Heart left ventricle (tissue), 16 donors: ENCODE measurements at regions of chr2 and their contacts with region 1.

Region 1: GRCh38 chr2:152005607-152006006 is 93.2 kb downstream of the CACNB4 start:
- DNase-seq: no peak
- ATAC-seq: no peak
- H3K4me3 ChIP-seq: no peak overlapping the region
- H3K27ac ChIP-seq: no peak overlapping the region
- H3K4me1 ChIP-seq: peaks cover 0 to 7% (median 0%) of the 10 kb centered on the region in 12 donors
- H3K27me3 ChIP-seq: no peaks in the 10 kb centered on the region
- CTCF ChIP-seq: no peak
- POLR2A ChIP-seq: no peak

Region 2: DNA sequence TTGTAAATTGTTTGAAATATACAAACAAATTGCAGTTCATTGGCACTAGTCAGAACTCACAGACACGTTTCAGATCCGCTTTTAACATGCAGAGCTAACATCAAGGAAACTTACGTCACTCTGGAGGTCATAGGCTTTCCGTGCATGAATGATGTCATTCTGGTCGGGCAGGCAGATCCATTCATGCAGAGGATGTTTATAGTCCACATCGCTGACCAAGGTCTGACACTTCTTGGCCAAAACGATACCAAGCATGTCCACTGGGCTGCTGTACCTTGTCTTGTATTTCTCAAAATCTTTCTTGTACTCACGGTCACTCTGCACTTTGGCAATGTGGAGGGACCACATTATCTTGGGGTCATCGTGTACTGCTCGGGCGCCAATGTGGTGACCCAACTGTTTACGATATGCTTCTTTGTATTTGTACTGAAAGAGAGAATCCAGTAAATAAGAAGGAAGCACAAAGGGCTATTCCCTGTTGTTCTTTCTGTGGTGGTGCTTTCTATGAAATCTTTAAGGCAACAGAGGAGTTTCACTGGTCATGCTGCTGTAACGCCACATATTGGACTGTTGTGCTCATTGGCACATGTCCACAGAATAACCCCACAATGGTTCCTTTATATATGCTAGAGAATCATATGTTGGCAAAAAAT is 386.1 kb before region 1 on chr2:
- intact Hi-C with region 1: loop called in 7 of 10 experiments (anchors 5 to 10 kb)
- DNase-seq: no peak
- ATAC-seq: peak in 1 of 4 donors; percentile 74
- H3K4me3 ChIP-seq: no peak overlapping the region
- H3K27ac ChIP-seq: no peak overlapping the region
- H3K4me1 ChIP-seq: no peaks in the 10 kb centered on the region
- H3K27me3 ChIP-seq: no peaks in the 10 kb centered on the region
- CTCF ChIP-seq: no peak
- POLR2A ChIP-seq: no peak

Region 3: DNA sequence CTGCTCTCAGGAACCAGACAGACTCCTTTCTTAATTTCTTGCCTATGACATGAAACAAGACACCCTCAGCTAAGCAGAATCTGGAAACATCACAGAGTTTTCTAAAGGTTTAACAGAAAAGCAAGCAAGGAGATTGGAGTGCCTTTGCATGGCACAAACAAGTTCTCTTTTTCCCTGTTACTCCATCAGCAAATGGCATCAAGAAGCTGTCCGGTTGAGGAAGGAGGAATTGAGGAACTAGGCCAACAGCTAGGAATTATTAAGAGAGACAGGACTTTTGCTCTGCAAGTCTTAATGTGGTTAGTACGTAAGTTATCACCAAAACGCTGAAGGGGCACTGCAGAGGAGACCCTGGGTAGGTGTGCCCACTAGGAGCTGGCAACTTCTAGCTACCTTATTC is 324.6 kb before region 1 on chr2:
- intact Hi-C with region 1: loop called in 2 of 10 experiments (anchors 5 to 10 kb)
- DNase-seq: no peak
- ATAC-seq: no peak
- H3K4me3 ChIP-seq: no peak overlapping the region
- H3K27ac ChIP-seq: no peak overlapping the region
- H3K4me1 ChIP-seq: no peaks in the 10 kb centered on the region
- H3K27me3 ChIP-seq: no peaks in the 10 kb centered on the region
- CTCF ChIP-seq: no peak
- POLR2A ChIP-seq: no peak

Region 4: DNA sequence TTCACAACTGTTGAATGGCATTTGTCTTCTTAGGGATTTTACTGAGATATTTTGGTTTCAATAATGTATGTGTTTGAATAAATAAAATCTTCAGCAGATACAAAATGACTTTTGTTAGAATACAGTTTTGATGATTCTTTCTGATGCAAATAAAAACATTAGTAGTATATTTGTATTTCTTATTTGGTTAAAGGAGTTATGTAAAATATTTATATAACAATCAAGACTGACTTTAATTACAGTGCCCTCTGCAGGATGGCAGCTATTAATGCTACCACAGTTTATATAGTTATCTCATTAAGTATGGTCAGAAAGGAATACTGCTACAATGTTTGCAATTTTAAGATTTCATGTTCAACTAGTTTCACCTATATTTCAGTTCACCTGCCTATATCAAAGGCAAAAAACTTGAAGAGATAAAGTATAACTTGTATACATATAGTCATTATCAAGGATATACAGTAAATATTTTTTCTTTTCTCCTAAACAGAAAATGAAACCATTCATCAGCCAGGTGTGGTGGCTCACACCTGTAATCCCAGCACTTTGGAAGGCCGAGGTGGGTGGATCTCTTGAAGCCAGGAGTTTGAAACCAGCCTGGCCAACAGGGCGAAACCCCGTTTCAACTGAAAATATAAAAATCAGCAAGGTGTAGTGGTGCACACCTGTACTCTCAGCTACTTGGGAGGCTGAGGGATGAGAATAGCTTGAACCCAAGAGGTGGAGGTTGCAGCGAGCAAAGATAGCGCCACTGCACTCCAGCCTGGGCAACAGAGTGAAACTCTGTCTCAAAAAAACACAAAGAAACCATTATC is 197.1 kb before region 1 on chr2:
- intact Hi-C with region 1: loop called in 1 of 10 experiments (anchors 10 kb)
- DNase-seq: no peak
- ATAC-seq: no peak
- H3K4me3 ChIP-seq: no peak overlapping the region
- H3K27ac ChIP-seq: no peak overlapping the region
- H3K4me1 ChIP-seq: peaks cover 0 to 13% (median 6%) of the 10 kb centered on the region in 12 donors
- H3K27me3 ChIP-seq: no peaks in the 10 kb centered on the region
- CTCF ChIP-seq: peak; percentile 36 to 70 (median 58)
- POLR2A ChIP-seq: no peak

Region 5: DNA sequence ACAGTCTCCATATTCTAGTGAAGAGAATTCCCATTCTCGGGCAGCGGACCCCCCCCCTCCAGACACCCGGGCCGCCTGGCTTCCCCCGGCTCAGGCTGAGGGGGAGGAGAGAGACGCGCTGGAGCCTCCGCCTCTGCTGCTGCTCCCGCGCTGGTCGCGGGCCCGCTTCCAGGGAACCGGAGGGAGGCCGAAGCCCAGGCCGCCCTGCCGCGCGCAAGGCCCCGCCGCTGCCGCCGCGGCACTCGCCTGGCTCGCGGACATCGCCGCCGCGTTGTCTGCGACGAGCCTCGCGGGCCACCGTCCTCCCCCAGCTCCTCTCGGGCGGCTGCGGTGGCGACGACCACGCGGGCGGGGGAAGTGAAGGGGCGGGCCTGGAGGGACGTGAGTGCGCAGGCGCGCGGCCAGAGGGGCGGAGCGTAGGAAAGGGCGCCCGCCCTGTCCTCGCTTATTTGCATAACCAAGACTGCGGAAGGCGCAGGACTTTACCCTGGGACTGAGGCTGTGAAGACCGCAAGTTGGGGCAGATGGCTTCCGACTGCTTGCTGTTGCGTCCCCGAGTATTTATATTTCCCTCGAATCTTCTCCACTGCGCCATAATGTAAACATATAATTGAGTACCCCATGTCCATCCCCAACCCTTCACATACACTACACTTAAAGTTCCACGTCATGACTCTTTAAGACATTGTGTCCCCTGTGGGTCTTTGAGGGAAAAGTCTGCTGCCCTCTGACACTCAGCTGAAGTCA is 177.3 kb before region 1 on chr2 and contains the start of gene ARL5A:
- intact Hi-C with region 1: loop called in 1 of 10 experiments (anchors 10 kb)
- DNase-seq: peak; percentile 96 to 98 (median 96)
- ATAC-seq: peak; percentile 98 to 99 (median 98)
- H3K4me3 ChIP-seq: peak within 1 kb of the TSS; percentile 74 to 96 (median 88)
- H3K27ac ChIP-seq: peak within 1 kb of the TSS; percentile 75 to 95 (median 92)
- H3K4me1 ChIP-seq: peaks cover 0 to 53% (median 41%) of the 10 kb centered on the region in 12 donors
- H3K27me3 ChIP-seq: no peaks in the 10 kb centered on the region
- CTCF ChIP-seq: no peak
- POLR2A ChIP-seq: peak in 1 of 2 donors; percentile 92
- total RNA-seq, gene ARL5A: 38.2 to 59.1 (median 54.5) TPM